Aorta (tissue), 5 donors: ENCODE measurements at regions of chr13 and their contacts with region 1.

Region 1: DNA sequence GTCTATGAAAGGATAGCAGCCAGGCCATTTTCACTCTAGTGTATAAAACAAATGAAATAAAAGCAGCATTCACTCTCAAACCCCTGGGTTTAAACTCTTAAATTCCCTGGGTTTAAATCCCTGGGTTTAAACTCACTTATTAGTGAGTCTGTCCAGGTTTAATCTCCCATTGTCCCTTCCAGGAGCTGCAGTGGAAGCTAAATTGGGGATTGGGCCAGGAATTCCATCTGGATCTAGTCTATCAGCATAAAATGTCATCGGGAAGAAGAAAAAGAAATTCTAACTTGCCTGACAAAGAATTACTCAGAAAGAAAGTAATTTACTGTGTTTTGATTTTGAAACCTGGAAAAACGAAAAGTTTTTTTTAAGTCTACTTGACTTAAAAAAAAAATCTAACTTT is 54.8 kb downstream of the FRY start:
- DNase-seq: no peak
- ATAC-seq: no peak
- H3K4me3 ChIP-seq: no peak overlapping the region
- H3K27ac ChIP-seq: no peak overlapping the region
- H3K4me1 ChIP-seq: peaks cover 3 to 4% of the 10 kb centered on the region in 2 donors
- H3K27me3 ChIP-seq: no peaks in the 10 kb centered on the region

Region 2: DNA sequence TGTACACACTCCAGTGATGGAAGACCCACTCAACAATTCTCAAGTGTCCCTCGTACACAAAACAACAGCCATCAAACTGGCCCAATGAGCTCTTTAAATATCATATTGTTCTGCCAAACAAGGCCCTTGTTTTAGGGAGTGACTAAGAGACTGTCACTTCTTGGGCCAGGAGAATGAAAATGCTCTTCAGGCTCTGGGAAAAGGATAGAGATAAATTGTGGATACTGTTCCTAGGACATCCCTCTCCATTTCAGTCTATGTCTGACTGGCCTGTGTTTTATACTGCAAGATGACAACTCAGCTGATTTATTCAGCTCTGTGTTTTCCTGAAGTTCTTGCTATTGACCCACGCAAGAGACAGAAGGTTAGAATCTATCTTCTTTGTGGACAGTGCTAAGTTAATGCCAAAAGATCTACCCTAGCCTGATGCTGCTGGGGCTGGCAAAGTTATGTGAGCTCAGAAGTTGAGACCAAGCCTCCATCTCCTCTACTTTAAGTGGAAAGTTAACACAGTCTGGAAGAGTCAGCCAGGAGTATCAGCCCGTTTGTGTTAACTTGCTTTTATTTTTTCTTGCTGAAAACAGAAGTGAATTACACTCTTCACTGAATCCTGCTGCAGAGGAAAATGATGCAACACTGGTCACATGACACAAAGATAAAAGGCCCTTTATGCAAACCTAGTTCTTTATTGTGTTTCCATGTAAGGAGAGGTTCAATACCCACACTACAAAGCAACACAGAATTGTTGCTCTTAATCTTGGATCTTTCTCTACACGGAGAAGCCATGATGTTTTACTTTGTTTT is 40.2 kb before region 1 on chr13:
- intact Hi-C with region 1: loop called in 1 of 2 experiments (anchors 5 kb)
- DNase-seq: no peak
- ATAC-seq: peak; percentile 63
- H3K4me3 ChIP-seq: no peak overlapping the region
- H3K27ac ChIP-seq: no peak overlapping the region
- H3K4me1 ChIP-seq: no peaks in the 10 kb centered on the region
- H3K27me3 ChIP-seq: no peaks in the 10 kb centered on the region

Region 3: GRCh38 chr13:32362574-32362973 is 276.2 kb after region 1 on chr13:
- intact Hi-C with region 1: no loop called
- DNase-seq: no peak
- ATAC-seq: no peak
- H3K4me3 ChIP-seq: no peak overlapping the region
- H3K27ac ChIP-seq: no peak overlapping the region
- H3K4me1 ChIP-seq: no peaks in the 10 kb centered on the region
- H3K27me3 ChIP-seq: no peaks in the 10 kb centered on the region